Activated CD4-positive, alpha-beta T cell treated with anti-CD3 and anti-CD28 coated beads, Interleukin-2, amount 10 ng/mL, durations not matched to agents 24 days and 14 days (primary cell): ENCODE measurements at regions of chr1 and their contacts with region 1.

Region 1: GRCh38 chr1:67214420-67215174 is 48.3 kb downstream of the IL23R start:
- DNase-seq: peak; percentile 88
- H3K4me3 Mint-ChIP-seq: no peak overlapping the region
- H3K27ac Mint-ChIP-seq: peak overlapping the region; percentile 62
- H3K4me1 Mint-ChIP-seq: peaks cover 41% of the 10 kb centered on the region
- H3K27me3 Mint-ChIP-seq: no peaks in the 10 kb centered on the region

Region 2: DNA sequence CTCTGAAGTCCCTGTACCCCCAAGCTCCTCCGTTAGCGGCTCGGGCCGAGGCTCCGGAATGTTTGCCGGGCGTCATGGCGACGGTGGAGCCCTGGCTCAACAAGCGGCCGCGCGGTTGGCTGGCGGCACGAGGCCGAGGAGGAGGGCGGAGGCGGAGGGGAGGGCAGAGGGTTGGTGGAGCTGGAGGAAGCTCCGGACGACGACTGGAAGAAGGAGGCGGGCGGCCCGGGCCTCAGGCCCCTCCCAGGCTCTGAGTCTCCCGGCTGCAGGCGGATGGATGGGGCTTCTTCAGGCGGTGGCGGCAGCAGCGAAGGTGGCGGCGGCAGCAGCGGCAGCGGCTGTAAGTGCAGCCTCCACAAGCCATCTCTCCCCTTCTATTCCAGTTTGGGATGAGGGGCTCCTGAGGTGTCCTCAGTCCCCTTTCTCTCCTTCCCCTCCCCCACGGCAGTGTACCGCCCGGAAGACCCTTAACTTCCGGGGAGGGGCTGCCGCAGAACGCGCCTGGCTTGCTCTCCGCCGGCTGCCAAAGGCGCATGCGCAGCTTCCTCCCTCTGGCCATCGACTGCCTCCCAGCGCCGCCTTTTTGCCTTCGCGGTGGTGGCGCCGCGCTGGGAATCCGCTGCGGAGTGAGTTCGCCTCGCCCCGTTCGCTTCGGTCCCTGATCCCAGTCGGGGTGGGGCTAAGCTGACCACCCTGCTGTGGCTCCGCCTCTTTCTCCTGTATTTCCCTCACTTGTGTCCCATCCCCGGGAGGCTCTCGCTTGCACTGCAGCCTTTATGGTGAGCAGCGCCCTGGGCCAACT is 289.6 kb before region 1 on chr1 and contains the starts of genes DNAI4 and MIER1:
- intact Hi-C with region 1: loop called (anchors 5 kb)
- DNase-seq: peak; percentile 99
- H3K4me3 Mint-ChIP-seq: peak within 1 kb of the TSS; percentile 99
- H3K27ac Mint-ChIP-seq: peak within 1 kb of the TSS; percentile 97
- H3K4me1 Mint-ChIP-seq: peaks cover 41% of the 10 kb centered on the region
- H3K27me3 Mint-ChIP-seq: no peaks in the 10 kb centered on the region
- total RNA-seq, gene DNAI4: 0.26 and 2.7 TPM in 2 replicates
- total RNA-seq, gene MIER1: 51.8 and 54.9 TPM in 2 replicates

Region 3: GRCh38 chr1:67053785-67054772 is 160.5 kb before region 1 on chr1 and contains the start of gene SLC35D1:
- intact Hi-C with region 1: loop called (anchors 5 kb)
- DNase-seq: peak; percentile 94
- H3K4me3 Mint-ChIP-seq: peak within 1 kb of the TSS; percentile 86
- H3K27ac Mint-ChIP-seq: peak within 1 kb of the TSS; percentile 95
- H3K4me1 Mint-ChIP-seq: peaks cover 28% of the 10 kb centered on the region
- H3K27me3 Mint-ChIP-seq: peaks cover 10% of the 10 kb centered on the region
- total RNA-seq, gene SLC35D1: 15.9 and 16.1 TPM in 2 replicates

Region 4: GRCh38 chr1:67162957-67163356 is 51.6 kb before region 1 on chr1:
- intact Hi-C with region 1: loop called (anchors 1 kb)
- DNase-seq: peak; percentile 83
- H3K4me3 Mint-ChIP-seq: peak overlapping the region; percentile 39
- H3K27ac Mint-ChIP-seq: peak overlapping the region; percentile 89
- H3K4me1 Mint-ChIP-seq: peaks cover 39% of the 10 kb centered on the region
- H3K27me3 Mint-ChIP-seq: no peaks in the 10 kb centered on the region

Region 5: GRCh38 chr1:67194209-67194863 is 20.3 kb before region 1 on chr1:
- intact Hi-C with region 1: loop called (anchors 1 kb)
- DNase-seq: peak; percentile 66
- H3K4me3 Mint-ChIP-seq: no peak overlapping the region
- H3K27ac Mint-ChIP-seq: peak overlapping the region; percentile 86
- H3K4me1 Mint-ChIP-seq: peaks cover 8% of the 10 kb centered on the region
- H3K27me3 Mint-ChIP-seq: no peaks in the 10 kb centered on the region

Region 6: DNA sequence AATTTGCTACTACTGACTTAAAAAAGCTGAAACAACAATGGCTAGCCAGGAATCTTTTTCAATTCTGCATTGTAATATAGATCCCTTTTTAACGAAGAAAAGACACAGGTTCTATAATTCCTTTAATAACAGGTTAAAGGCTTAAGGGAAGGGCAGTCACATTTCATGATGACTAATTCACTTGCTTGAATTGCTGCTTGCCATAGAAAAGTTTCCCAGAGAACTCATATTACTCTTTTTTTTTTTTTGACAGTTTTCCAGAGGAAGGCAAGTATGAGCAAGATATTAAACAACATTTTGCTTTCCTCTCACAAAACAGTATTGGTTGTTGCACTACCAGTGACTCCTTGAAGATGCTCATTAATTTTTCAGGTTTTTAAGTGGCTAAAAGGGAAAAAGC is 12.6 kb after region 1 on chr1:
- intact Hi-C with region 1: no loop called
- DNase-seq: no peak
- H3K4me3 Mint-ChIP-seq: no peak overlapping the region
- H3K27ac Mint-ChIP-seq: no peak overlapping the region
- H3K4me1 Mint-ChIP-seq: peaks cover 7% of the 10 kb centered on the region
- H3K27me3 Mint-ChIP-seq: no peaks in the 10 kb centered on the region

Region 7: DNA sequence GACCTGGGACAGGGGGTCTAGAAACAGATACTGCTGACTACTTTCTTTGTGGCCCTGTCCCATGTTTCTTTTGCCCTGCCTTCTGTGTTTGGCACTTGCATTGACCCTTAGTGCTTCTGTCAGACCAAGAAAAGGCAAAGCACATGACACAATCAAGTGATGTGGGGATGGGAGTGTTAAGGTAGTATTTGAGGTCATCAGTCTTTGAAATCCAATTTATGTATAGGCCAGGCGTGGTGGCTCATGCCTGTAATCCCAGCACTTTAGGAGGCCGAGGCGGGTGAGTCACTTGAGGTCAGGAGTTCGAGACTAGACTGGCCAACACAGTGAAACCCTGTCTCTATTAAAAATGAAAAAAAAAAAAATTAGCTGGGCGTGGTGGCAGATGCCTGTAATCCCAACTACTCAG is 189.6 kb after region 1 on chr1:
- intact Hi-C with region 1: loop called (anchors 5 kb)
- DNase-seq: no peak
- H3K4me3 Mint-ChIP-seq: no peak overlapping the region
- H3K27ac Mint-ChIP-seq: no peak overlapping the region
- H3K4me1 Mint-ChIP-seq: peaks cover 12% of the 10 kb centered on the region
- H3K27me3 Mint-ChIP-seq: no peaks in the 10 kb centered on the region

Region 8: DNA sequence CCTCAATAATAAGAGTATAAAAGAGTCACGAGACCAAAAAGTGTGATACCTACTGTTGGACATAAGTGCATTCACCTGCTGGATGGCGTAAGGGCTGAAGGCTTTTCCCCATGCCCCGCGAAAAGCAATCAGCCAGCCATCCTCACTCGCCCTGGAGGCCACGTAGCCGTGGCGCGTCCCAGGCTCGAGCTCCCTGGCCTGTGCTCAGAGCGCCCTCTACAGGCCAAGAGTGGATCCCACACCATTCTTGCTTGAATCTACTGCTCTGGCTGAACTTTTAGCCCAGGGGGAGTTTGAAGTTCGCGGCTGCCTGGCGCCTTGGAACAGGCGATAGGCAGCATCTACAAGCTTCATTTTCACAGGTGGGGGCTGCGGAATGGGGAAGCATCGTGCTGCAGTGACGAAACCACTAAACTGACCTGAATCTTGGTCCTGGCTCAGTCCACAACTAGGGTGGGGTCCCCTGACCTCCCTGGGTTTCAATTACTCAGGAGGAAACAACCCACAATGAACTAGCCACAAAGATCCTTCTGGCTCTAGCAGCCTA is 285.9 kb after region 1 on chr1:
- intact Hi-C with region 1: loop called (anchors 1 kb)
- DNase-seq: peak; percentile 96
- H3K4me3 Mint-ChIP-seq: peak overlapping the region; percentile 53
- H3K27ac Mint-ChIP-seq: no peak overlapping the region
- H3K4me1 Mint-ChIP-seq: peaks cover 8% of the 10 kb centered on the region
- H3K27me3 Mint-ChIP-seq: peaks cover 8% of the 10 kb centered on the region